ENCODE measurements at regions of chr17 and their contacts with region 1.

Region 1: DNA sequence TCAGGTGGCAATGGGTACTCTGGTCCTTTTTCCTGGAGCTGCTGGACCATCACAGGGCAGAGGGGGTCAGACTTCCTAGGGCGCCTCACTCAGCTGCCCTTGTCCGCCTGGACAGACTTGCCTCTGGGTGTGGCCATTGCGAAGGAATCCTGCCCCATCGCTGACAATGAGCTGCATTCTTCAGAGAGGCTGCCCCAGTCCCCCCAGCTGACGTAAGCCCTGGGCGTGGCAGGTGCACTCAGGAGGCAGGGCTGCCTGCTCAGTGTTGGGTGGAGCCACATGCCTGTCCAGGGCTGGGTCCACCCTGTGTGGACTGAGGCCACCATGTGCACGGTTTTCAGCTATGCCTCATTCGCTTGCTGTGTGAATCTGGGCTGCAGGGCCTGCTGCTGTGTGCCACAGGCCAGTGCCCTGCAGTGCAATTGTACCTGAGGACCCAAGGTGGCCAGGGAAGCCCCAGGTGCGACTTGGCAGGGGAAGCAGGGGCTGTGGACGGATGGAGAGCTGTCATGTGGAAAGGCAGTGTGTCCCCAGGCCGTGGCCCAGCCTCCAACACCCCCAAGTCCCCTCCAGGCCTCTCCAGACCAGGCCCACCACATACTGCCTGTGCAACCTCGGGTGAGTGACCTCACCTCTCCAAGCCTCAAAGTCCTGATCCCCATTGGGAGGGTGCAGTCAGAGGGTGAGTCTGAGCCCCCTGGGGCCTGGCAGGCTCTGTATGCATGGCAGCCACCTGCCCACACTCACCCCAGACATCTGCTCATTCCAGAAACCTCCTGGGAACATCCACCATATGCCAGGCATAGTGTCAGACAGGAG is 14.0 kb upstream of the MPRIP start:
- DNase-seq: peak; percentile 97
- H3K4me3 Mint-ChIP-seq: no peak overlapping the region
- H3K27ac Mint-ChIP-seq: peak overlapping the region; percentile 92
- H3K4me1 Mint-ChIP-seq: peaks cover 38% of the 10 kb centered on the region
- H3K27me3 Mint-ChIP-seq: no peaks in the 10 kb centered on the region
- CTCF ChIP-seq: no peak

Region 2: DNA sequence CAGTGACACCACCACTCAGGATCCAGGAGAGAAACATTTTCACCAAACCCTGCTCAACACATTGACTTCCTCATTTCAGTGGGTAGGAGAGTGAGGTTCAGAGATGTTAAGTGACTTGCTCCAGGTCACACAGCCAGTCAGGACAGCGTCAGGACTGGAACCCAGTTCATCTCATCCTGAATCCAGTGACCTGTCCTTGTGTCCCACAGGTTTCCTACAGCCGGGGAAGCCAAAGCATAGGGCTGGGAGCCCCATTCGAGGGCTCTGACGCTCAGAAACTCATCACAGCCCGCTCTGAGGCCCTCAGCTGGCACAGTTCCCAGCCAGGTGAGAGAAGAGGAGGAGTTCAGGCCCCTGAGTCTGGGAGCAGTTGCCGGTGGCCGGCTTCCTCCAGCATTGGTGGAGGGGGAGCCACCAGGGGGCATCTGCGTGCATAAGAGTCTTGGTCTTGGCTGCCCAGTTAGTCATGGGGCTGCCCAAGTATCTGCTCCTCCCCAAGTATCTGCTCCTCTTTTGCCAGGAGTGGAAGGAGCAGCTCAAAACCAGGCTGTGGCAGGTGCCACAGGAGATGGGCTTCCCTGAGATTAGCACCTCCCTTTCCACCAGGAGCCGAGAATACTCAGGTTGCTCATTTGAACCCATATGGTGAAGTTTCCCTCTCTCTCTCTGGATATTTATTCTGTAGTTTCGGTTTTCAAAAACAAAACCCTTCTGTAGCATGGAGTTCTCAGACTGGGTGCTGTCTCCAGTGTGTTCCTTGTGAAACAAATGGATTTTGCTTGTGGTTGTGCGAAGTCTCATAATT is 112.3 kb before region 1 on chr17:
- CTCF ChIA-PET with region 1: no interaction called
- POLR2A ChIA-PET with region 1: no interaction called
- intact Hi-C with region 1: no loop called
- DNase-seq: peak; percentile 76
- H3K4me3 Mint-ChIP-seq: no peak overlapping the region
- H3K27ac Mint-ChIP-seq: no peak overlapping the region
- H3K4me1 Mint-ChIP-seq: no peaks in the 10 kb centered on the region
- H3K27me3 Mint-ChIP-seq: no peaks in the 10 kb centered on the region
- CTCF ChIP-seq: peak; percentile 41

Region 3: GRCh38 chr17:17016199-17016866 is 11.9 kb before region 1 on chr17:
- CTCF ChIA-PET with region 1: interaction called, 4 read pairs
- POLR2A ChIA-PET with region 1: interaction called, 15 read pairs
- intact Hi-C with region 1: no loop called
- DNase-seq: no peak
- H3K4me3 Mint-ChIP-seq: no peak overlapping the region
- H3K27ac Mint-ChIP-seq: no peak overlapping the region
- H3K4me1 Mint-ChIP-seq: peaks cover 25% of the 10 kb centered on the region
- H3K27me3 Mint-ChIP-seq: no peaks in the 10 kb centered on the region
- CTCF ChIP-seq: no peak

Region 4: DNA sequence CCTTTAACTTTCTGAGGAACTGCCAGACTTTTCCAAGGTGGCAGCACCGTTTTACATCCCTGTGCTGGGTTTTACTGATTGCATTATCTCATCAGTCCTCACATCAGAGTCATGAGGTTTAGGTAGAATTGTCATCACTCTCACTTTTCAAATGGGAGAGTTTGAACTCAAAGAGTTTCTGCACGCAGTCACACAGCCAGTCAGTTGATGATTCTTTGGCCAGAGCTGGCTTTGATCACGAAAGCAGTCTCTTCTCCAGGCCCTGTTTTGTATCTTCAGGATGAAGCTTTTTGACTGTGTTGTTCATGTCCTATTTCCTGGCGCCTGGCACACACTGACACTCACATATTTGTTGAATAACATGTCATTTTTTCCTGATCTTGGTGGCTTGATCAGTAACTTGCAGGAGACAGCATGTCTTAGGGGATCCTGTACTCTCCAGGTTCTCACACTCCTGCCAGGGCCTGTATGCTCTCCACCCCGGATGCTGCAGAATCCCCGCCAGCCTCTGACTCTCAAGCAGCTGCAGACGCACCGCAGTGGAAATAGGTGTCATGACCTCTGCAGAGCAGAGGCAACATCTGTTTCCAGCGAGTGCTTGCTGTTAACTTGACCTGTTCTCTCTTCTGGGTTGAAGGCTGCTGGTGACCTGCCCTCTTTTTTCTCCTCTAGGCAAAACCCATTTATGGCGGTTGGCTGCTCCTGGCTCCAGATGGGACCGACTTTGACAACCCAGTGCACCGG is 46.9 kb after region 1 on chr17:
- CTCF ChIA-PET with region 1: no interaction called
- POLR2A ChIA-PET with region 1: no interaction called
- intact Hi-C with region 1: no loop called
- DNase-seq: no peak
- H3K4me3 Mint-ChIP-seq: no peak overlapping the region
- H3K27ac Mint-ChIP-seq: peak overlapping the region; percentile 46
- H3K4me1 Mint-ChIP-seq: peaks cover 50% of the 10 kb centered on the region
- H3K27me3 Mint-ChIP-seq: no peaks in the 10 kb centered on the region
- CTCF ChIP-seq: no peak

Measured in MCF 10A (cell line).